ENCODE measurements at regions of chr10 and their contacts with region 1.

Region 1: DNA sequence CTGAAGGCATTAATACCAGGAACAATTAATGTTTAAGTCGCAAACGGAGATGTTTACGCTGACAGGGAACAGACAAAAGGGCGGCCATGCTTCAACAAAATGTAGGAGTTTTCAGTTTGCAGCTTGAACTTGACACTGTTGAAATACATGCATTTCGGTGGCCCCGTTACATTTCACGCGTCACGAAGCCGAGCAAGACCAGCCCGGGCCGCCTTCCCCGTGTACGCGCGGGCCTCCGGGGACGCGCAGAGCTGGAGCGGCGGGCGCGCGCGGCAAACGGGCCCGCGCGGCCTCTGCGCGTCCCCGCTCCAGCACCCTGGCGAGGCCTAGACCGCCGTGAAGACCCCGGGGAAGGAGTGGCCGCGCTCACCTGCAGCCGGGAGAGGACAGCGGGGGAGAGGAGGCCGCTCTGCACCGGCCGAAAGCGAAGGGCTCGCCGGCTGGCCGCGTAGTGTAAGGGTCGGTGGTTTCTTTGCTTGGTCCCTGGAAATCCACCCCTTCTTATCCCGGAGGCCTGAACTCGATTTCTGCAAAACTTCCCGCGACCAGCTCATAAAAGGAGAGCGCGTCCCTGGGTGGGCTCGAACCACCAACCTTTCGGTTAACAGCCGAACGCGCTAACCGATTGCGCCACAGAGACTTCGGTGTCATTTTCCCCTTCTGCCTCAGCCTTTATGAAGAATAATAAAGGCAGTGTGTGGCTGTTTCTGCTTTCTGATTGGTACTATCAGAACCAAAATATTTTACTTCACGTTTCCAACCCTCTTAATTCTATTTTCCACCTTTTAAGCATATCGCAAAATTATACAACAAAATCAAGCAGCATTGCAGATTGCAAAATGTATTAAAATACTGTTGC is 11.4 kb upstream of the EBLN1 start:
- DNase-seq: peak; percentile 89 to 94 (median 90)
- ATAC-seq: peak; percentile 91
- H3K4me3 ChIP-seq: peak overlapping the region; percentile 44
- H3K27ac ChIP-seq: peak overlapping the region; percentile 92
- H3K4me1 ChIP-seq: peaks cover 5 to 8% of the 10 kb centered on the region in 2 experiments; a peak in 3 of 5 replicates
- H3K27me3 ChIP-seq: no peaks in the 10 kb centered on the region
- CTCF ChIP-seq: peak in 1 of 3 experiments; percentile 8; a peak in 2 of 6 replicates
- EP300 ChIP-seq: peak; percentile 78
- POLR2A ChIP-seq: peak; percentile 70
- RAD21 ChIP-seq: peak; percentile 37 to 39

Region 2: GRCh38 chr10:21533467-21534279 is 695.5 kb before region 1 on chr10 and contains the start of gene MLLT10:
- CTCF ChIA-PET with region 1: no interaction called
- POLR2A ChIA-PET with region 1: no interaction called
- in situ Hi-C with region 1: no loop called
- intact Hi-C with region 1: loop called (anchors 5 kb)
- DNase-seq: peak; percentile 88 to 97 (median 90)
- ATAC-seq: peak; percentile 74
- H3K4me3 ChIP-seq: peak within 1 kb of the TSS; percentile 60
- H3K27ac ChIP-seq: peak within 1 kb of the TSS; percentile 96
- H3K4me1 ChIP-seq: peaks cover 8 to 11% of the 10 kb centered on the region in 2 experiments; a peak in 4 of 5 replicates
- H3K27me3 ChIP-seq: no peaks in the 10 kb centered on the region
- CTCF ChIP-seq: 0 out of 6 replicates have a peak, but pooled peaks of 2 of the 3 experiments have one; percentile 7 to 19
- EP300 ChIP-seq: no peak
- POLR2A ChIP-seq: peak; percentile 89
- RAD21 ChIP-seq: no peak
- polyA plus RNA-seq, gene MLLT10: 18.8 to 25.8 TPM

Region 3: DNA sequence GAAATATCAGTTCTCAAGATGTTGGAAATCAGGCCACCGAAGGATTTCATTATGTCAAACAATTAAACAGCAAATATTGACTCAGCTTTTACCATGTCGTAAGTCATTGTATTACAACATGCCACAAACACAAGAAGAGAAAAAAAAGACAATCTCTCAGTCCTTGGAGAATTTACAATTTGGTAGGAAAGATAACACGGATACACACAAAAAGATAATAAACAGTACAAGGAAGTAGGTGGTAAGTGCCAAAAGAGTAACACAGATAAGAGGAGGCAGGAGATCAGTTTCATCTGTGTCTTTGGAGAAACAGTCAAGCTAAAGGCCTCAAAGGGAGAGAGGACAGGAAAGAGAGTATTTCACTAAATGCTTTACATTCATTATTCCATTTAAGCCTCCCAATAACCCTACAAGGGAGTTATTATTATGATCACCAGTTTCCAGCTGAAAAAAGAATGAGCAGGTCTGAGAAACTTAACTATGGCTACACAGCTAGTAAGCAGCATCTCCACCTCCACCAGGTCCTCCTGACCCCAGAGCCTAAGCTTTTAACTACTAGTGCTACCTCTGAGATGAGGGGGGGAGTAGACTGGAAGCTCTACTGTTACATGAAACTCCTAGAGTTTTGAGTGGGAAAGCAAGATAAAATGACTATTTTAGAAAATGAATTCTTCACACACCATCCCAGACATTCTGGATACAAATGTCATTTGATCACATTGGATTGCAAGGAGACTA is 211.7 kb before region 1 on chr10:
- CTCF ChIA-PET with region 1: no interaction called
- POLR2A ChIA-PET with region 1: no interaction called
- in situ Hi-C with region 1: no loop called
- intact Hi-C with region 1: loop called (anchors 1 kb)
- DNase-seq: peak; percentile 37 to 74 (median 48)
- ATAC-seq: peak; percentile 76
- H3K4me3 ChIP-seq: no peak overlapping the region
- H3K27ac ChIP-seq: peak overlapping the region; percentile 78
- H3K4me1 ChIP-seq: peaks cover 5 to 38% of the 10 kb centered on the region in 2 experiments; a peak in 4 of 5 replicates
- H3K27me3 ChIP-seq: no peaks in the 10 kb centered on the region
- CTCF ChIP-seq: no peak
- EP300 ChIP-seq: peak; percentile 93
- POLR2A ChIP-seq: no peak
- RAD21 ChIP-seq: peak in 1 of 2 experiments; percentile 32; a peak in 3 of 4 replicates

Region 4: GRCh38 chr10:22218451-22218850 is 10.7 kb before region 1 on chr10:
- CTCF ChIA-PET with region 1: no interaction called
- POLR2A ChIA-PET with region 1: interaction called, 12 read pairs
- in situ Hi-C with region 1: no loop called
- intact Hi-C with region 1: no loop called
- DNase-seq: peak in 2 of 4 experiments; percentile 30 to 38
- ATAC-seq: peak; percentile 87
- H3K4me3 ChIP-seq: no peak overlapping the region
- H3K27ac ChIP-seq: no peak overlapping the region
- H3K4me1 ChIP-seq: peaks cover 0 to 12% of the 10 kb centered on the region in 2 experiments; a peak in 3 of 5 replicates
- H3K27me3 ChIP-seq: no peaks in the 10 kb centered on the region
- CTCF ChIP-seq: peak; percentile 42 to 46 (median 46); a peak in 5 of 6 replicates
- EP300 ChIP-seq: no peak
- POLR2A ChIP-seq: no peak
- RAD21 ChIP-seq: peak in 1 of 2 experiments; percentile 55; a peak in 2 of 4 replicates

Region 5: GRCh38 chr10:22308390-22308789 is 79.2 kb after region 1 on chr10:
- CTCF ChIA-PET with region 1: no interaction called
- POLR2A ChIA-PET with region 1: no interaction called
- in situ Hi-C with region 1: no loop called
- intact Hi-C with region 1: no loop called
- DNase-seq: peak in 2 of 4 experiments; percentile 33 to 40
- ATAC-seq: peak; percentile 27
- H3K4me3 ChIP-seq: no peak overlapping the region
- H3K27ac ChIP-seq: no peak overlapping the region
- H3K4me1 ChIP-seq: peaks cover 0 to 7% of the 10 kb centered on the region in 2 experiments; a peak in 3 of 5 replicates
- H3K27me3 ChIP-seq: no peaks in the 10 kb centered on the region
- CTCF ChIP-seq: no peak
- EP300 ChIP-seq: no peak; the same call in 1 of the 2 replicates
- POLR2A ChIP-seq: no peak
- RAD21 ChIP-seq: no peak

Measured in K562 (cell line).